ENCODE measurements at regions of chr5 and their contacts with region 1.

Region 1: GRCh38 chr5:141557681-141558136 is 61.1 kb downstream of the DIAPH1 start:
- DNase-seq: peak; percentile 86
- H3K4me3 ChIP-seq: no peak overlapping the region
- H3K27ac ChIP-seq: peak overlapping the region; percentile 36
- H3K4me1 ChIP-seq: peaks cover 30% of the 10 kb centered on the region
- CTCF ChIP-seq: peak; percentile 99

Region 2: GRCh38 chr5:141369994-141370848 is 187.5 kb before region 1 on chr5 and contains the start of gene PCDHGB3:
- CTCF ChIA-PET with region 1: interaction called, 5 read pairs
- POLR2A ChIA-PET with region 1: no interaction called
- intact Hi-C with region 1: loop called (anchors 5 kb)
- DNase-seq: peak; percentile 61
- H3K4me3 ChIP-seq: peak within 1 kb of the TSS; percentile 34
- H3K27ac ChIP-seq: no peak within 1 kb of the TSS
- H3K4me1 ChIP-seq: peaks cover 12% of the 10 kb centered on the region
- CTCF ChIP-seq: peak; percentile 72
- total RNA-seq, gene PCDHGB3: 3.5 and 5.8 TPM in 2 replicates

Region 3: DNA sequence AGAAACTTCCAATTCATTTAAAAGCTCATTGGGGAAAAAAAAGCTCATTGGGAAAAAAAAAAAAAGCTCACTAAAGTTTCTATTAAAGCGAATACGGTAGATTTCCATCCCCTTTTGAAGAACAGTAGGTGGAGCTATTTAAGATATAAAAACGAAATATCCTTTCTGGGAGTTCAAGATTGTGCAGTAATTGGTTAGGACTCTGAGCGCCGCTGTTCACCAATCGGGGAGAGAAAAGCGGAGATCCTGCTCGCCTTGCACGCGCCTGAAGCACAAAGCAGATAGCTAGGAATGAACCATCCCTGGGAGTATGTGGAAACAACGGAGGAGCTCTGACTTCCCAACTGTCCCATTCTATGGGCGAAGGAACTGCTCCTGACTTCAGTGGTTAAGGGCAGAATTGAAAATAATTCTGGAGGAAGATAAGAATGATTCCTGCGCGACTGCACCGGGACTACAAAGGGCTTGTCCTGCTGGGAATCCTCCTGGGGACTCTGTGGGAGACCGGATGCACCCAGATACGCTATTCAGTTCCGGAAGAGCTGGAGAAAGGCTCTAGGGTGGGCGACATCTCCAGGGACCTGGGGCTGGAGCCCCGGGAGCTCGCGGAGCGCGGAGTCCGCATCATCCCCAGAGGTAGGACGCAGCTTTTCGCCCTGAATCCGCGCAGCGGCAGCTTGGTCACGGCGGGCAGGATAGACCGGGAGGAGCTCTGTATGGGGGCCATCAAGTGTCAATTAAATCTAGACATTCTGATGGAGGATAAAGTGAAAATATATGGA is 127.2 kb before region 1 on chr5 and contains the start of gene PCDHGA12:
- CTCF ChIA-PET with region 1: interaction called, 10 read pairs
- POLR2A ChIA-PET with region 1: no interaction called
- intact Hi-C with region 1: no loop called
- DNase-seq: peak; percentile 76
- H3K4me3 ChIP-seq: no peak within 1 kb of the TSS
- H3K27ac ChIP-seq: no peak within 1 kb of the TSS
- H3K4me1 ChIP-seq: no peaks in the 10 kb centered on the region
- CTCF ChIP-seq: peak; percentile 85
- total RNA-seq, gene PCDHGA12: 2.6 and 3.9 TPM in 2 replicates

Region 4: DNA sequence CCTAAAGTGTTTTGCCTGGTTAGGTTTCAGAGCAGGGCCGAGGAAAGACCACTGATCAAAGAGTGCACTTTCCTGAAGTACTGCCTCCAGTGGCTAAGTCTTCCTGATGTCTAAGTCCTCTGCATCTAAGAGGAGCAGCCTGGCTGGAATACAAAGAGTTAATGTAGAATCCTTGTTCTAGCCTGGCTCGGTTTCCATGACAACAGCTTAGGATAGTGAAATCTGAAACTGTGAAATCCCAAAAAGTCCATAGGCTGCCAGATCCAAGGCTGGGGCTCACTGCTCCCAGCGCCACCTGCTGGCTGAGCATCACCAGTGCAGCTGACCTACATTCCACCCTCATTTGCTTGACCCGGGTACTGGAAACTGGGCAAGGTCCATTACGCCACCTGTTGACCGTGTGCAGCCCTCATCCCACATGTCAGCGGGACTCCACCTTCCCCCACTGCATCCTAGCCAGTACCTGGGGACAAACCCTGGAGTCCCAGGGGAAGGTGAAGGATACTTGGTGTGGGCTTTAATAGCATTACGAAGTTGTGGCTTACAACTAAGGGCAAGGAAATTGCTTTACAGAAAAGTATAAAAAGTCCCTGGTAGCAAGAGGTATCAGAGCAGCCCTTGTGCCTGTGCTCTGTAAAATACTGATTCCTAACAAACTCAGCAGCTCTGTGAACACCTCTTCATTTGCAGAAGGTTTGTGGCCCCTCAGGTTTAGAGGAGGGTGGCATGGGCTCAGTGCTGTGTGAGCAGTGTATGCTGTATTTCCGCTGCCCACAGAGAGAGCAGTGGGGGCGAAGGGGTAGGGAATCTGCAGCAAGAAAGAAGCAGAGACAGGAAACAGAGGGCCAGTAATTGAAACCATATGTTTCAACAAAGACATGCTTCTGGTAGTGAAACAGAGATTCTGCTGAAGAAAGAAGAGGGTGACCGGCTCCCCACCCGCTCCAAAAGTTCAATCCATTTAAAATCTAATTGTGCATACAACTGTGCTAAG is 32.8 kb before region 1 on chr5:
- CTCF ChIA-PET with region 1: no interaction called
- POLR2A ChIA-PET with region 1: interaction called, 11 read pairs
- intact Hi-C with region 1: loop called (anchors 1 kb)
- DNase-seq: peak; percentile 77
- H3K4me3 ChIP-seq: peak overlapping the region; percentile 42
- H3K27ac ChIP-seq: peak overlapping the region; percentile 98
- H3K4me1 ChIP-seq: peaks cover 84% of the 10 kb centered on the region
- CTCF ChIP-seq: peak; percentile 100

Region 5: GRCh38 chr5:141573489-141574121 is 15.9 kb after region 1 on chr5:
- CTCF ChIA-PET with region 1: no interaction called
- POLR2A ChIA-PET with region 1: no interaction called
- intact Hi-C with region 1: no loop called
- DNase-seq: no peak
- H3K4me3 ChIP-seq: no peak overlapping the region
- H3K27ac ChIP-seq: no peak overlapping the region
- H3K4me1 ChIP-seq: peaks cover 6% of the 10 kb centered on the region
- CTCF ChIP-seq: no peak

Region 6: DNA sequence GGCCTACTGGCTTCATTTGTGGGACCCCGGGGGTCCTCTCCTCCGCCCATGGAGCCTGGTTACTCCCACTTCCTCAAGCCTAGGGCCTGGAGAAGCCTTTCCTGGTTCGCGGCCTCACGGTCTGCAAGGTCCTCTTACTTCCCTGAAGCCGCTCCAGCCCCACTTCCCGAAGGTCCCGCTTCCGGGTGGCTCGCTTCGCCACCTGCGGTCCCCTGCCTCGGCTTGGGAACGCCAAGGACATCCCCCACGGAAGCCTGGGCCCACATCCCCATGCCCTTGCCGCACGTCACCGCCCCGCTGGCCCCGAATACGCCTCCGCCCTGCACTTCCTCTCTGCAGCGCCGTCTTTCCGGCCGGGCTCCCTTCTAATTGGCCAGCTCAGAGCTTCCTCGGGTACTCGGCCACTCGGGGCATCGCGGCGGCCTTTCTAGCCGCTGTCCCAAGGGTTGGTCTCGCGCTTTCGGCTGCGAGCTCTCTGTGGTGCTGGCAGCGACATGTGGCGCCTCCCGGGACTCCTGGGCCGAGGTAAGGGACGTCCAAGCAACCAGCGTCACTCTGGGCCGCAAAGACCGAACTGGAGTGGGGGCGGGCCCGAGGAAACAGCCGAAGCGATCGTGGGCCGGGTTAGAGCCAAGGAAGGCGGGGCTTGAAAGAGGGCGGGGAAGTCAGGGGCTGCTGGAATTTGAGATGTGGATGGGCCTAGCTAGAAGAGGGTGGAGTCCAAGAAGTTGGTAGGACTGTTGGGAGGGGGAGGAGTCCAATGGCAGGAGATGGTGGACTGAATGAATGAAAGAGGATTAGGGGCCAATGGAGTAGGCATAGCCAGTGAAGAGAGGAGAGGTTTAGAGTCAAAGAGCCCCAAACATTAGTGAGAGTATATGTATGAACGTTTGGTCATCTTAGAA is 366.0 kb after region 1 on chr5 and contains the start of gene DELE1:
- CTCF ChIA-PET with region 1: no interaction called
- POLR2A ChIA-PET with region 1: no interaction called
- intact Hi-C with region 1: no loop called
- DNase-seq: peak; percentile 90
- H3K4me3 ChIP-seq: peak within 1 kb of the TSS; percentile 93
- H3K27ac ChIP-seq: peak within 1 kb of the TSS; percentile 69
- H3K4me1 ChIP-seq: peaks cover 12% of the 10 kb centered on the region
- CTCF ChIP-seq: no peak
- total RNA-seq, gene DELE1: 67.9 and 81.2 TPM in 2 replicates

Measured in OCI-LY7 (cell line).